ENCODE measurements at regions of chr6 and their contacts with region 1.

Region 1: DNA sequence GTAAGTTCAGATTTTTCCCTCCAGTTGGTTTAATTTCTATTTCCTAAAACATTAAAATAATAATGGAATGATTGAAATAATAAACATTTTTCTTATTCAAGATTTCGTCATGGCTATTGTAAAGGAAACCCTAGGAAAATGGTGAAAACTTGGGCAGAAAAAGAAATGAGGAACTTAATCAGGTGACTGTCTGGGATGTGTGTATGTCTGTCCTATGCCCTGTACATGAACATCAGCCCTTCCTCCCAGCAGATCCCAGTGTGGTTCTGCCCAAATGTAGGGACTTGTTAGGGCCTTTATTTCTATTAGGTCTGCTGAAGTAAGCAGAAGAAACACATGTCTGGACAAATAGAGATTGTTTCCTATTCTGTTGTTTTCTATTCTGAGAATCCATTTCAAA is 13.1 kb downstream of the RIOK1 start:
- DNase-seq: no peak
- ATAC-seq: no peak
- H3K4me3 ChIP-seq: no peak overlapping the region
- H3K4me3 Mint-ChIP-seq: no peak overlapping the region
- H3K27ac ChIP-seq: no peak overlapping the region
- H3K27ac Mint-ChIP-seq: no peak overlapping the region
- H3K4me1 ChIP-seq: no peaks in the 10 kb centered on the region
- H3K4me1 Mint-ChIP-seq: no peaks in the 10 kb centered on the region
- H3K27me3 ChIP-seq: no peaks in the 10 kb centered on the region
- H3K27me3 Mint-ChIP-seq: no peaks in the 10 kb centered on the region

Region 2: DNA sequence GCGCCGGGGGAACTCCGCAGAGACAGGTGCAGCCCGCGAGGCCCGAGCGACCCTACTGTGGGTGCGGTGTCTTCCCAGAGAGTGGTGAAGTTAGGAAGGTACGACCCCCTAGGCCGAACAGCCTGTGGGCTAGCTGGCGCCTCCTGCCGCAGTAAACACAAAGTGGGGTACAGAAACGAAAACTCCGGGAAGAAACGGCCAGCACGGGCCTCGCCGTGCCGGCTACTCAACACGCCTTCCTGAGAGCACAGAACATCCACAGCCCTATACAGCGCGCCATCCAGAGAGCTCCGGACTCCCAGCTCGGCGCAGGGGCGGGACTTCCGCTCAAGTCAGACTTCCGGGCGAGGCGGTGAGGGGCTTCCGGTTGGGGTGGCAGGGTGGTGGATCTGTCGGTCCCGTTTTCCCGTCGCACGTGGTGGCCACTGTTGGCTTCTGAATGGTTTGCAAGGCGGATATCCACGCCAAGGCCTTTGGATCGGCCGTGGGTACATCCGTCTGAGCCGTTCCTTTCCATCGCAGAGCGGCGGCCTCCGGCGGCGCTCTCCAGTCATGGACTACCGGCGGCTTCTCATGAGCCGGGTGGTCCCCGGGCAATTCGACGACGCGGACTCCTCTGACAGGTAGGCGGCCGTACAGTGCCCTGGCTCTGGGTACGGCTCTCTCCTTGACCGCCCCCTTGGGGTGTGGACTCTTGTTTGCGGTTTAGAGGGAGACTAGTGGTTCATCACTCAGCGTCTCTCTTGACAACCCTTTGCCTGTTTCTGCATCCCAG is 13.1 kb before region 1 on chr6 and contains the starts of genes CAGE1 and RIOK1:
- CTCF ChIA-PET with region 1: interaction called in 1 of 2 experiments, 4 read pairs
- POLR2A ChIA-PET with region 1: interaction called in 1 of 2 experiments, 10 read pairs
- DNase-seq: peak; percentile 85 to 96 (median 93)
- ATAC-seq: peak; percentile 91 to 97 (median 95)
- H3K4me3 ChIP-seq: peak within 1 kb of the TSS; percentile 85 to 87
- H3K4me3 Mint-ChIP-seq: peak within 1 kb of the TSS; percentile 82 to 98 (median 91)
- H3K27ac ChIP-seq: peak within 1 kb of the TSS; percentile 100
- H3K27ac Mint-ChIP-seq: peak within 1 kb of the TSS; percentile 97 to 99
- H3K4me1 ChIP-seq: peaks cover 16 to 26% of the 10 kb centered on the region in 2 experiments
- H3K4me1 Mint-ChIP-seq: peaks cover 44 to 51% (median 47%) of the 10 kb centered on the region in 3 donors
- H3K27me3 ChIP-seq: peaks cover 0 to 2% of the 10 kb centered on the region in 2 experiments
- H3K27me3 Mint-ChIP-seq: no peaks in the 10 kb centered on the region
- total RNA-seq, gene CAGE1: 0.09 to 0.75 (median 0.31) TPM in 4 of 5 donors, not detected in the other
- total RNA-seq, gene RIOK1: 27.4 to 42.9 (median 34.6) TPM

Measured in T-cell (primary cell).